Sigmoid colon (tissue), 7 donors: ENCODE measurements at regions of chr9 and their contacts with region 1.

Region 1: GRCh38 chr9:123544007-123544827 is 188.2 kb downstream of the CRB2 start:
- DNase-seq: no peak
- H3K4me3 ChIP-seq: no peak overlapping the region
- H3K27ac ChIP-seq: no peak overlapping the region
- H3K4me1 ChIP-seq: peaks cover 0 to 4% (median 0%) of the 10 kb centered on the region in 4 donors
- H3K27me3 ChIP-seq: no peaks in the 10 kb centered on the region
- CTCF ChIP-seq: peak; percentile 39 to 75 (median 60)
- EP300 ChIP-seq: no peak
- POLR2A ChIP-seq: no peak

Region 2: DNA sequence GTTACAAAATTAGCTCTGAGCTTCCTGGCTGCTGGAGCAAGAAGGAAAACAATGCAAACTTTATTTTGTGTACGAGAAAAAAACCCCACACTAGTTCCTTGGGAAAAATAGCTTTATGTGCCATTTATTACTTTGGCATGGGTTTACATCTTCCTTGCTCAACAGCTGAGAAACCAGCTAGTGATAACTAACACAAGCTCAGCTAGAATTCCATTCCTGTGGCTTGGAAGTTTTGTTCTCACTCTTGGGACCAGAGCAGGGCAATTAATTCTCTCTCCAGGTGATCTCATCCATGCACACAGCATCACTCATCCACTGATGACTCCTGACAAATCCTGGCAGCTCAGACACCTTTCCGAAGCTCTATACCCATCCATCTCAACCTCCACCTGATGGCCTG is 84.1 kb before region 1 on chr9:
- intact Hi-C with region 1: no loop called
- DNase-seq: peak; percentile 33
- H3K4me3 ChIP-seq: no peak overlapping the region
- H3K27ac ChIP-seq: no peak overlapping the region
- H3K4me1 ChIP-seq: no peaks in the 10 kb centered on the region
- H3K27me3 ChIP-seq: no peaks in the 10 kb centered on the region
- CTCF ChIP-seq: no peak
- EP300 ChIP-seq: no peak
- POLR2A ChIP-seq: no peak

Region 3: GRCh38 chr9:123485216-123485615 is 59.0 kb before region 1 on chr9:
- intact Hi-C with region 1: loop called (anchors 10 kb)
- DNase-seq: no peak
- H3K4me3 ChIP-seq: no peak overlapping the region
- H3K27ac ChIP-seq: no peak overlapping the region
- H3K4me1 ChIP-seq: no peaks in the 10 kb centered on the region
- H3K27me3 ChIP-seq: no peaks in the 10 kb centered on the region
- CTCF ChIP-seq: no peak
- EP300 ChIP-seq: no peak
- POLR2A ChIP-seq: no peak

Region 4: DNA sequence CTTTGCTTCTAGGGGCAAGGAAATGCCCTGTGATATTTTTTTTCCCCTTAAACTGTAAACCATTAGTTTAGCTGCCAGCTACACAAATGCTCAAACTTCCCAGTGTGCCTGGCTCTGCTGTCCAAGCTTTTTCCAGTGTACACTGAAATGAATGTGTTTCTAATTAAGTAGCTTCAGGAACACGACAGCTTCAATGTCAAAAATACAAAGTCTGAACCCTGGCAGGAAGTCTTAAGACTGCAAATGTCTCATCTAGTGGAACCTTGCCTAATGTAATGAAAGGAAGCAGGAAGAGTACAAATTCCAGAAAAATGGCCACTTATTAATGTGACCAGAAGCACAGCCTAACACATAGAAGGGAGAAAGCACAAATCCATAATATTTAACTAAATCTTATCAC is 67.0 kb after region 1 on chr9:
- intact Hi-C with region 1: no loop called
- DNase-seq: no peak
- H3K4me3 ChIP-seq: no peak overlapping the region
- H3K27ac ChIP-seq: no peak overlapping the region
- H3K4me1 ChIP-seq: no peaks in the 10 kb centered on the region
- H3K27me3 ChIP-seq: no peaks in the 10 kb centered on the region
- CTCF ChIP-seq: no peak
- EP300 ChIP-seq: no peak
- POLR2A ChIP-seq: no peak

Region 5: GRCh38 chr9:124164811-124165210 is 620.6 kb after region 1 on chr9:
- intact Hi-C with region 1: no loop called
- DNase-seq: peak; percentile 71
- H3K4me3 ChIP-seq: no peak overlapping the region
- H3K27ac ChIP-seq: no peak overlapping the region
- H3K4me1 ChIP-seq: no peaks in the 10 kb centered on the region
- H3K27me3 ChIP-seq: no peaks in the 10 kb centered on the region
- CTCF ChIP-seq: no peak
- EP300 ChIP-seq: no peak
- POLR2A ChIP-seq: no peak